Motor neuron (in vitro differentiated cells): ENCODE measurements at regions of chr5 and their contacts with region 1.

Region 1: GRCh38 chr5:145681686-145682085 is 153.5 kb downstream of the PRELID2 start:
- ATAC-seq: peak in 5 of 8 experiments; percentile 53 to 100 (median 92)
- H3K4me3 ChIP-seq: no peak overlapping the region
- H3K27ac ChIP-seq: no peak overlapping the region
- H3K4me1 ChIP-seq: no peaks in the 10 kb centered on the region

Region 2: DNA sequence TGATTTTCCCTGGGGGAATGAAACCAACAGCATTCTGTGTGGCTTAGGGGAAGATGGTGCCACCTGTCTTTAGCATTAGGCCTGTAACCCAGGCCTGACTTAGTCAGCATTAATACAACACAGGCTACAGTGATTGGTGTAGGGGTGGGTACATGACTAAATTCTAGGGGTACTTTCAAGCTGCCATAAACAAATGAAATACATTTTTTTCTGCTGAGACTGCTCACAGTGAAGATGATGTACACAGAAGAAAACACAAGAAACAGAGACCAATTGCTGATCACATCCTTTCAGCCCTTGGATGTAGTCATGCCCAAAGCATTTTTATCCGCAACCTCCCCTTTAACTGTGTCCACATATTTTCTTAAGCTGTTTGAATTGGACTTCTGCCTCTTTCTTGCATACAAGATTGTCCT is 983.8 kb before region 1 on chr5:
- in situ Hi-C with region 1: no loop called
- ATAC-seq: peak in 3 of 8 experiments; percentile 52 to 78 (median 54)
- H3K4me3 ChIP-seq: no peak overlapping the region
- H3K27ac ChIP-seq: no peak overlapping the region
- H3K4me1 ChIP-seq: no peaks in the 10 kb centered on the region

Region 3: GRCh38 chr5:145811834-145812625 is 130.3 kb after region 1 on chr5:
- in situ Hi-C with region 1: loop called in 1 of 9 experiments (anchors 25 kb)
- ATAC-seq: peak; percentile 86 to 99 (median 92)
- H3K4me3 ChIP-seq: no peak overlapping the region
- H3K27ac ChIP-seq: no peak overlapping the region
- H3K4me1 ChIP-seq: peaks cover 0 to 5% of the 10 kb centered on the region in 2 donors